CD4-positive, alpha-beta memory T cell (primary cell): ENCODE measurements at regions of chr5 and their contacts with region 1.

Region 1: GRCh38 chr5:141825791-141826560 is 52.2 kb downstream of the PCDH1 start:
- DNase-seq: peak in 2 of 5 donors; percentile 4 to 7
- H3K4me3 ChIP-seq: no peak overlapping the region
- H3K4me3 Mint-ChIP-seq: no peak overlapping the region
- H3K27ac ChIP-seq: no peak overlapping the region
- H3K27ac Mint-ChIP-seq: no peak overlapping the region
- H3K4me1 ChIP-seq: no peaks in the 10 kb centered on the region
- H3K4me1 Mint-ChIP-seq: peaks cover 0 to 3% (median 0%) of the 10 kb centered on the region in 4 donors
- H3K27me3 ChIP-seq: no peaks in the 10 kb centered on the region
- H3K27me3 Mint-ChIP-seq: peaks cover 4 to 10% of the 10 kb centered on the region in 2 donors

Region 2: GRCh38 chr5:141811287-141812155 is 14.5 kb before region 1 on chr5:
- CTCF ChIA-PET with region 1: interaction called, 46 read pairs
- POLR2A ChIA-PET with region 1: no interaction called
- intact Hi-C with region 1: no loop called
- DNase-seq: peak in 4 of 5 donors; percentile 4 to 45 (median 17)
- H3K4me3 ChIP-seq: no peak overlapping the region
- H3K4me3 Mint-ChIP-seq: peak overlapping the region in 1 of 8 donors; percentile 26
- H3K27ac ChIP-seq: no peak overlapping the region
- H3K27ac Mint-ChIP-seq: no peak overlapping the region
- H3K4me1 ChIP-seq: no peaks in the 10 kb centered on the region
- H3K4me1 Mint-ChIP-seq: peaks cover 0 to 3% (median under 1%) of the 10 kb centered on the region in 4 donors
- H3K27me3 ChIP-seq: peaks cover 15% of the 10 kb centered on the region
- H3K27me3 Mint-ChIP-seq: peaks cover 30 to 64% of the 10 kb centered on the region in 2 donors

Region 3: DNA sequence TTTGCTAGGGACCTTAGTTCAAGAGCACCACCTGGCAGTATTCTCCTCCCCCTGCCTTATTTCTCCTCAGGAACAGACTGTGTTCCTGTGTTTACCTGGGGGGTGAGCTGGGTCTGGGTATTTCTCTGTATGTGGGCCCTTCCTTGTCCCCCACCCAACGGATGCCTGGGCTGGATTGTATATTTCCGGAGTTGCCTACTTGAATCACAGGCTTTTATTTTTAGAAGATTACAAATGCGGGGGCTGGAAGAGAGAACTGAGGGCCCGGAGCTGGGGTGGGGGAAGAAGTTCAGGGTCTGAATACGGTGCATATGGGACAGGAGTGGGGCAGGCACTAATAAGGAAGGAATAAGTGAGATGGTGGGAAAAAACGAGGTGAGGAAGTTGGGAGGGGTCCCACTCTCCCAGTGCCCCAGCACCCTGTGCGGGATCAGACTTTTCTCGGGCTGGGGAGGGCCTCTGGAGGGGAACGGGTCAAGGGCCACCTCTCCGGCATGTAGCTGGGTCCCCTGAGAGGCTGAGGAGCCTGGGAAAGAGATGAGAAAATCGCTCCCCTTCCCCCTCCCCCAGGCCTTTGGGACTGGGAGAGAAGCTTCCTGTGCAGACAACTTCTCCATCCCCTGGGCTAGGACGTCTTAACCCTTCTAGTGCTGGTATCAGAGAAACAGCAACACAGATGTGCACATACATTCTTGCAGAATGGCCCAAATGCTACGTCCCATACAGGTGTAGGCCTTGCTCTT is 10.1 kb after region 1 on chr5:
- CTCF ChIA-PET with region 1: interaction called, 15 read pairs
- POLR2A ChIA-PET with region 1: no interaction called
- intact Hi-C with region 1: no loop called
- DNase-seq: no peak
- H3K4me3 ChIP-seq: no peak overlapping the region
- H3K4me3 Mint-ChIP-seq: no peak overlapping the region
- H3K27ac ChIP-seq: no peak overlapping the region
- H3K27ac Mint-ChIP-seq: no peak overlapping the region
- H3K4me1 ChIP-seq: peaks cover 3% of the 10 kb centered on the region
- H3K4me1 Mint-ChIP-seq: peaks cover 0 to 4% (median 1%) of the 10 kb centered on the region in 4 donors
- H3K27me3 ChIP-seq: peaks cover 6% of the 10 kb centered on the region
- H3K27me3 Mint-ChIP-seq: peaks cover 8 to 28% of the 10 kb centered on the region in 2 donors